ENCODE measurements at regions of chrX and their contacts with region 1.

Region 1: DNA sequence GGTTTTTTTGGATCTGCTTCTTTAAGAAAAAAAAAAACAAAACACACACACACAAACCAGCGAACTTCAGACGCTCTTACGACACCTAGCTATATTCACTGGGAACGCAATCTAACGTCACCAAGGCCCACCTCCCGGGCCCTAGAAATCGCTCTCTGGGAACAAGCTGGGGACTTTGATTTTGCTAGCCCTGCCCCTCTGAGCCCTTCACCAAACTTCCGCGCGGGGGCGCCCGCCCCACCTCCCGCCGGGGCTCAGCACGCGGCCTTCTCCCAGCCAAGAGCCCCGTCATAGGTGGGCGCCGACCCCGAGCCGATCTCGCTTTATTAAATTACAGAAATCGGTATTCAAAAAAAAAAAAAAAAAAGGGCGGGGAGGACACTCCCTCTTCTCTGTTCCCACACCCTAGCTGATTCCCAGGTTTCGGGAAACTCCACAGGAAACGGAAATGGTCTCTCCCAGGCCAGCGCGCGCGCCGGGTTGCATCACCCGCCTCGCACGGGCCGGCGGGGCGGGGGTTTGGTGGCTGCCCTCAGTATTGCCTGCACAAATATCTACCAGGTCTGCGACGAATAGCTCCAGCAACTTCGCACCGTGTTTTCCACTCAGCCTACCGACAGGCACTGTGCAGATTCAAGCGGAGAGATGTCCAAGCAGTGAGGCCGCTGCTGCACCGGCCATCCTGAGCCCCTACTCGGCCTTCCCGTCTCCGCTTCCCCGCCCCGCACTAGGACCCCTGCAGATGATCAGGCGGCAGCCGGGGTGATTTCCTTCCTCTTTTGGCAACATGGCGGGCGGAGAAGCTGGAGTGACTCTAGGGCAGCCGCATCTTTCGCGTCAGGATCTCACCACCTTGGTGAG is at the start of gene EIF2S3:
- DNase-seq: peak; percentile 75 to 97 (median 93)
- ATAC-seq: peak; percentile 90
- H3K4me3 ChIP-seq: peak within 1 kb of the TSS; percentile 68
- H3K4me3 Mint-ChIP-seq: peak within 1 kb of the TSS in 2 of 10 donors; percentile 96 to 99
- H3K27ac ChIP-seq: no peak within 1 kb of the TSS
- H3K27ac Mint-ChIP-seq: peak within 1 kb of the TSS in 5 of 9 donors; percentile 97 to 100 (median 99)
- H3K4me1 ChIP-seq: peaks cover 0 to 6% of the 10 kb centered on the region in 2 donors
- H3K4me1 Mint-ChIP-seq: peaks cover 0 to 25% (median 4%) of the 10 kb centered on the region in 7 donors
- H3K27me3 ChIP-seq: no peaks in the 10 kb centered on the region
- H3K27me3 Mint-ChIP-seq: no peaks in the 10 kb centered on the region
- total RNA-seq, gene EIF2S3: 174 to 270 (median 226) TPM

Region 2: GRCh38 chrX:23694606-23695005 is 359.8 kb before region 1 on chrX:
- CTCF ChIA-PET with region 1: interaction called, 3 read pairs
- POLR2A ChIA-PET with region 1: no interaction called
- intact Hi-C with region 1: loop called (anchors 1 to 10 kb)
- DNase-seq: peak in 7 of 9 donors; percentile 7 to 40 (median 34)
- ATAC-seq: peak; percentile 78
- H3K4me3 ChIP-seq: no peak overlapping the region
- H3K4me3 Mint-ChIP-seq: no peak overlapping the region
- H3K27ac ChIP-seq: no peak overlapping the region
- H3K27ac Mint-ChIP-seq: no peak overlapping the region
- H3K4me1 ChIP-seq: no peaks in the 10 kb centered on the region
- H3K4me1 Mint-ChIP-seq: peaks cover 0 to 4% (median 0%) of the 10 kb centered on the region in 7 donors
- H3K27me3 ChIP-seq: no peaks in the 10 kb centered on the region
- H3K27me3 Mint-ChIP-seq: no peaks in the 10 kb centered on the region

Region 3: GRCh38 chrX:23742697-23743622 is 311.5 kb before region 1 on chrX and contains the start of gene ACOT9:
- CTCF ChIA-PET with region 1: no interaction called
- POLR2A ChIA-PET with region 1: no interaction called
- intact Hi-C with region 1: loop called in 1 of 2 experiments (anchors 2 kb)
- DNase-seq: peak; percentile 26 to 84 (median 49)
- ATAC-seq: peak; percentile 97
- H3K4me3 ChIP-seq: peak within 1 kb of the TSS; percentile 75
- H3K4me3 Mint-ChIP-seq: peak within 1 kb of the TSS; percentile 77 to 91 (median 86)
- H3K27ac ChIP-seq: peak within 1 kb of the TSS; percentile 49
- H3K27ac Mint-ChIP-seq: peak within 1 kb of the TSS; percentile 69 to 90 (median 75)
- H3K4me1 ChIP-seq: peaks cover 0 to 14% of the 10 kb centered on the region in 2 donors
- H3K4me1 Mint-ChIP-seq: peaks cover 13 to 36% (median 18%) of the 10 kb centered on the region in 7 donors
- H3K27me3 ChIP-seq: no peaks in the 10 kb centered on the region
- H3K27me3 Mint-ChIP-seq: no peaks in the 10 kb centered on the region
- total RNA-seq, gene ACOT9: 8.2 to 40.1 (median 9.1) TPM

Region 4: GRCh38 chrX:23907498-23908218 is 146.8 kb before region 1 on chrX and contains the starts of genes APOO and CXorf58:
- CTCF ChIA-PET with region 1: interaction called, 16 read pairs
- POLR2A ChIA-PET with region 1: interaction called, 28 read pairs
- intact Hi-C with region 1: loop called (anchors 1 kb)
- DNase-seq: peak; percentile 80 to 94 (median 91)
- ATAC-seq: peak; percentile 95
- H3K4me3 ChIP-seq: peak within 1 kb of the TSS; percentile 62
- H3K4me3 Mint-ChIP-seq: peak within 1 kb of the TSS; percentile 79 to 88 (median 83)
- H3K27ac ChIP-seq: peak within 1 kb of the TSS; percentile 88
- H3K27ac Mint-ChIP-seq: peak within 1 kb of the TSS; percentile 85 to 94 (median 90)
- H3K4me1 ChIP-seq: peaks cover 10 to 16% of the 10 kb centered on the region in 2 donors
- H3K4me1 Mint-ChIP-seq: peaks cover 0 to 17% (median 8%) of the 10 kb centered on the region in 7 donors
- H3K27me3 ChIP-seq: no peaks in the 10 kb centered on the region
- H3K27me3 Mint-ChIP-seq: no peaks in the 10 kb centered on the region
- total RNA-seq, gene APOO: 5.4 to 19.2 (median 7.5) TPM
- total RNA-seq, gene CXorf58: not detected

Region 5: GRCh38 chrX:24024819-24025740 is 29.3 kb before region 1 on chrX:
- CTCF ChIA-PET with region 1: interaction called, 22 read pairs
- POLR2A ChIA-PET with region 1: interaction called, 56 read pairs
- intact Hi-C with region 1: loop called (anchors 1 kb)
- DNase-seq: peak; percentile 68 to 82 (median 76)
- ATAC-seq: peak; percentile 96
- H3K4me3 ChIP-seq: peak overlapping the region; percentile 74
- H3K4me3 Mint-ChIP-seq: peak overlapping the region; percentile 71 to 94 (median 86)
- H3K27ac ChIP-seq: peak overlapping the region; percentile 96
- H3K27ac Mint-ChIP-seq: peak overlapping the region in 7 of 9 donors; percentile 48 to 92 (median 85)
- H3K4me1 ChIP-seq: no peaks in the 10 kb centered on the region
- H3K4me1 Mint-ChIP-seq: peaks cover 7 to 38% (median 27%) of the 10 kb centered on the region in 7 donors
- H3K27me3 ChIP-seq: no peaks in the 10 kb centered on the region
- H3K27me3 Mint-ChIP-seq: peaks cover 0 to 3% (median 0%) of the 10 kb centered on the region in 5 donors

Region 6: DNA sequence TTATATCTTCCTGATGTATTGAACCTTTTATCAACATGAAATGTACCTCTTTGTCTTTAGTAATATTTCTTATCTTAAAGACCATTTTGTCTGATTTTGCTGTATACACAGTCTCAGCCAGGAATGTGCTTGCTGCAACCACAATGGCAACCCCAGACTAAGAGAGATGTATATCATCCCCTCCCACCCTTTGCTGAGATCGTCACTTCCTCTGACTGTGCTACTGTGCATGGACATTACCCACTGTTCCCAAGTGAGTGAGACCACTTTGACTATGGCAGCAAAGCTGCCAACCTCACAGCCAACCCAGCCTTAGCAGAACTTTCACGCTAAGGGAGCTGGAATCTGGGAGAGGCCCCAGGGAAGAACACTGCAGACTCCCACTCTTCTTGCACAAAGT is 46.3 kb after region 1 on chrX:
- CTCF ChIA-PET with region 1: no interaction called
- POLR2A ChIA-PET with region 1: no interaction called
- intact Hi-C with region 1: no loop called
- DNase-seq: no peak
- ATAC-seq: no peak
- H3K4me3 ChIP-seq: no peak overlapping the region
- H3K4me3 Mint-ChIP-seq: no peak overlapping the region
- H3K27ac ChIP-seq: no peak overlapping the region
- H3K27ac Mint-ChIP-seq: no peak overlapping the region
- H3K4me1 ChIP-seq: no peaks in the 10 kb centered on the region
- H3K4me1 Mint-ChIP-seq: peaks cover 0 to 13% (median 0%) of the 10 kb centered on the region in 7 donors
- H3K27me3 ChIP-seq: no peaks in the 10 kb centered on the region
- H3K27me3 Mint-ChIP-seq: no peaks in the 10 kb centered on the region

Region 7: GRCh38 chrX:24253469-24253868 is 199.1 kb after region 1 on chrX:
- CTCF ChIA-PET with region 1: no interaction called
- POLR2A ChIA-PET with region 1: no interaction called
- intact Hi-C with region 1: no loop called
- DNase-seq: no peak
- ATAC-seq: no peak
- H3K4me3 ChIP-seq: no peak overlapping the region
- H3K4me3 Mint-ChIP-seq: no peak overlapping the region
- H3K27ac ChIP-seq: no peak overlapping the region
- H3K27ac Mint-ChIP-seq: no peak overlapping the region
- H3K4me1 ChIP-seq: no peaks in the 10 kb centered on the region
- H3K4me1 Mint-ChIP-seq: no peaks in the 10 kb centered on the region
- H3K27me3 ChIP-seq: no peaks in the 10 kb centered on the region
- H3K27me3 Mint-ChIP-seq: peaks cover 0 to 4% (median 0%) of the 10 kb centered on the region in 5 donors

Measured in naive thymus-derived CD4-positive, alpha-beta T cell (primary cell).